Endothelial cell of umbilical vein (primary cell): ENCODE measurements at regions of chr2 and their contacts with region 1.

Region 1: DNA sequence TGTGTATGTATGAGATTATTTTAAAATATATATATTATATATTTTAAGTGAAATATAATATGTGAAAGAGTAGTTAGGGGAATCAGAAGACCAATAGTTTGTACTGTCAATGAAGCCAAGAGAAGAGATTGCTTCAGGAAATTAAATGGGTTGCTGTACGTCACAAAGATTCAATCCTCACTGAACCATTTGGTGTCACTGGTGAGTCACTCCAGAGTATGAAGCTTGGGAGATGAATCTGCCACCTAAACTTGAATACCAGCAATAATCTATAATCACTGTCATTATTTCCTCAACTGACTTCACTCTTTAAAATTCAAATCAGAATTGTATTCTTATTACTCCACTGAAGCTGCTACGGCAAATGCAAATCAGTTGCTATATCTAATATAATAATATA is 41.9 kb upstream of the SCN9A start:
- DNase-seq: peak; percentile 42
- H3K4me3 ChIP-seq: no peak overlapping the region
- H3K27ac ChIP-seq: no peak overlapping the region
- H3K4me1 ChIP-seq: peaks cover 5% of the 10 kb centered on the region
- H3K27me3 ChIP-seq: no peaks in the 10 kb centered on the region
- CTCF ChIP-seq: peak in 1 of 2 donors; percentile 9
- POLR2A ChIP-seq: no peak

Region 2: GRCh38 chr2:165953655-165954606 is 463.7 kb before region 1 on chr2 and contains the start of gene TTC21B:
- CTCF ChIA-PET with region 1: interaction called, 9 read pairs
- POLR2A ChIA-PET with region 1: no interaction called
- dilution Hi-C with region 1: no loop called
- intact Hi-C with region 1: loop called (anchors 5 kb)
- DNase-seq: peak; percentile 97
- H3K4me3 ChIP-seq: peak within 1 kb of the TSS; percentile 60 to 99 (median 93)
- H3K27ac ChIP-seq: peak within 1 kb of the TSS; percentile 81
- H3K4me1 ChIP-seq: peaks cover 17% of the 10 kb centered on the region
- H3K27me3 ChIP-seq: no peaks in the 10 kb centered on the region
- CTCF ChIP-seq: peak; percentile 76 to 78
- POLR2A ChIP-seq: peak; percentile 75
- total RNA-seq, gene TTC21B: 18.0 and 21.9 TPM in 2 replicates

Region 3: GRCh38 chr2:166134252-166135151 is 283.2 kb before region 1 on chr2:
- CTCF ChIA-PET with region 1: interaction called, 4 read pairs
- POLR2A ChIA-PET with region 1: no interaction called
- dilution Hi-C with region 1: no loop called
- intact Hi-C with region 1: loop called (anchors 5 kb)
- DNase-seq: no peak
- H3K4me3 ChIP-seq: no peak overlapping the region
- H3K27ac ChIP-seq: no peak overlapping the region
- H3K4me1 ChIP-seq: no peaks in the 10 kb centered on the region
- H3K27me3 ChIP-seq: peaks cover 8 to 24% of the 10 kb centered on the region in 2 experiments
- CTCF ChIP-seq: no peak
- POLR2A ChIP-seq: no peak

Region 4: GRCh38 chr2:166361351-166362153 is 56.1 kb before region 1 on chr2:
- CTCF ChIA-PET with region 1: interaction called, 87 read pairs
- POLR2A ChIA-PET with region 1: no interaction called
- dilution Hi-C with region 1: no loop called
- intact Hi-C with region 1: loop called (anchors 1 kb)
- DNase-seq: peak; percentile 69
- H3K4me3 ChIP-seq: no peak overlapping the region
- H3K27ac ChIP-seq: no peak overlapping the region
- H3K4me1 ChIP-seq: no peaks in the 10 kb centered on the region
- H3K27me3 ChIP-seq: no peaks in the 10 kb centered on the region
- CTCF ChIP-seq: peak; percentile 34 to 50
- POLR2A ChIP-seq: no peak

Region 5: DNA sequence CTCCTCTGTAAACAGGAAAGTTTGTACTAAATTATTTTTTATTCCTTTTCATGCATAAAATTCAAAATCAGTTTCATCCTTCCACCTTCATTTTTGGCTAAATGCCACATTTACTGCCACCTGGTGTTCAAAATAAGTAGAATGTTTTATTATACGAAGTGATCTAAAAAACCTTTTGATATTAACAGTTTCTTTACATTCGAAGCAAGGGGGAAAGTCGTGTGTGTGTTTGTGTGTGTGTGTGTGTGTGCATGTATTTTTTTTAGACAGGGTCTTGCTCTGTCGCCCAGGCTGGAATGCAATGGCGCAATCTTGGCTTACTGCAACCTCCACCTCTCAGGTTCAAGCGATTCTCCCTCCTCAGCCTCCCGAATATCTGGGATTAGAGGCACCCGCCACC is 32.9 kb before region 1 on chr2:
- CTCF ChIA-PET with region 1: interaction called, 17 read pairs
- POLR2A ChIA-PET with region 1: no interaction called
- dilution Hi-C with region 1: no loop called
- intact Hi-C with region 1: loop called (anchors 5 kb)
- DNase-seq: peak; percentile 58
- H3K4me3 ChIP-seq: no peak overlapping the region
- H3K27ac ChIP-seq: no peak overlapping the region
- H3K4me1 ChIP-seq: peaks cover 14% of the 10 kb centered on the region
- H3K27me3 ChIP-seq: peaks cover 6 to 10% of the 10 kb centered on the region in 2 experiments
- CTCF ChIP-seq: peak; percentile 32 to 37
- POLR2A ChIP-seq: no peak

Region 6: GRCh38 chr2:166758956-166759355 is 341.3 kb after region 1 on chr2:
- CTCF ChIA-PET with region 1: no interaction called
- POLR2A ChIA-PET with region 1: no interaction called
- dilution Hi-C with region 1: no loop called
- intact Hi-C with region 1: no loop called
- DNase-seq: no peak
- H3K4me3 ChIP-seq: no peak overlapping the region
- H3K27ac ChIP-seq: no peak overlapping the region
- H3K4me1 ChIP-seq: no peaks in the 10 kb centered on the region
- H3K27me3 ChIP-seq: no peaks in the 10 kb centered on the region
- CTCF ChIP-seq: no peak
- POLR2A ChIP-seq: no peak